PC-9 (cell line): ENCODE measurements at regions of chr16 and their contacts with region 1.

Region 1: DNA sequence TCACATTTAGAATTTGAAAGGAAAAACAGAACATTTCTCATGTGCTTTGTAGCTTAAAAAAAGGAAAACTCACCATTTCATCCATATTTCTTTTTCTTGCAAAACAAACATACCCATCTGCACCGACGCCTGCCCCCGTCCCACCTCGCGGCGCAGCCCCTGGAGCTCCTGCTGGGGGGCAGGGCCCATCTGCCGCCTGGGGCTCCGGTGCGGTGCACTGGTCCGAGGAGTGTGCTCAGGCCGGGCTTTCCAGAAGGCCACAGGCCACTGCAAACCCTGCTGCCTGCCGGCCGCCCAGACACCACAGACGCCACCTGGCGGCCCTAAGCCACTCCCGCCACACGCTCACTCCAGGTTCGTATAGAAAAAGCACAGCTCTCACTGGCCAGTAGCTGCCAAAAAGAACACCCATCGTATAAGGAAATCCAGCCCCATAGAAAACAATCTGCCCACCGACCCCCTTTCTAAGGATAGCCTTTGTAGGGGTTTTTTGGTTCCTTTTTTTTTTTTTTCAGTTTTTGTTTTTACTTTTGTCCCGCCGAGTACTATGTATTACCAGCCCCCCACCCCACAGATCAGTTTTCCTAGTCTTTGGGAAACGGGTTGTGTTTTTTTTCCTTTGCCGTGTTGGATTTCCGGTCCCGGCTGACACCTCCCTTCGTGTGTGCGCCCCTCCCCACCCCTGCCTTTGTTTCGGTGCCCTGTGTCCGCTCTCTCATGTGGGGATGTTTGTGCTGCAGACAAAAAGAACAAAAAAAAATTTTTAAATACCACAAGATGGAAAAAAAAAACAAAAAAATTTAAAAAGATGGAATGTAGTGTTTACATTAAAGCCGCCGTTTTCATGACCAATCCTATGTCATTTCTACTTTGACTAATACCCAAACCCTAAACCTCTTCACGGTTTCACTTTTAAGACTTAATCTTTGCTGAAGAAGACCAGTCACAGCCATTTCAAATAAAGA is 68.8 kb downstream of the AMFR start:
- DNase-seq: peak; percentile 70 to 85
- H3K4me3 ChIP-seq: peak overlapping the region; percentile 54
- H3K27ac ChIP-seq: peak overlapping the region; percentile 66
- H3K4me1 ChIP-seq: peaks cover 37% of the 10 kb centered on the region
- H3K27me3 ChIP-seq: no peaks in the 10 kb centered on the region
- CTCF ChIP-seq: peak; percentile 84

Region 2: GRCh38 chr16:55711959-55712876 is 644.3 kb before region 1 on chr16:
- CTCF ChIA-PET with region 1: no interaction called
- POLR2A ChIA-PET with region 1: no interaction called
- intact Hi-C with region 1: loop called (anchors 2 kb)
- DNase-seq: peak; percentile 46 to 54
- H3K4me3 ChIP-seq: no peak overlapping the region
- H3K27ac ChIP-seq: no peak overlapping the region
- H3K4me1 ChIP-seq: no peaks in the 10 kb centered on the region
- H3K27me3 ChIP-seq: no peaks in the 10 kb centered on the region
- CTCF ChIP-seq: peak; percentile 87

Region 3: GRCh38 chr16:56041686-56042085 is 314.9 kb before region 1 on chr16:
- CTCF ChIA-PET with region 1: no interaction called
- POLR2A ChIA-PET with region 1: no interaction called
- intact Hi-C with region 1: no loop called
- DNase-seq: peak; percentile 16 to 76
- H3K4me3 ChIP-seq: no peak overlapping the region
- H3K27ac ChIP-seq: no peak overlapping the region
- H3K4me1 ChIP-seq: no peaks in the 10 kb centered on the region
- H3K27me3 ChIP-seq: no peaks in the 10 kb centered on the region
- CTCF ChIP-seq: peak; percentile 62

Region 4: GRCh38 chr16:56324406-56324805 is 32.2 kb before region 1 on chr16:
- CTCF ChIA-PET with region 1: interaction called, 4 read pairs
- POLR2A ChIA-PET with region 1: interaction called, 7 read pairs
- intact Hi-C with region 1: loop called (anchors 2 kb)
- DNase-seq: peak; percentile 95 to 97
- H3K4me3 ChIP-seq: no peak overlapping the region
- H3K27ac ChIP-seq: peak overlapping the region; percentile 94
- H3K4me1 ChIP-seq: peaks cover 48% of the 10 kb centered on the region
- H3K27me3 ChIP-seq: no peaks in the 10 kb centered on the region
- CTCF ChIP-seq: no peak

Region 5: DNA sequence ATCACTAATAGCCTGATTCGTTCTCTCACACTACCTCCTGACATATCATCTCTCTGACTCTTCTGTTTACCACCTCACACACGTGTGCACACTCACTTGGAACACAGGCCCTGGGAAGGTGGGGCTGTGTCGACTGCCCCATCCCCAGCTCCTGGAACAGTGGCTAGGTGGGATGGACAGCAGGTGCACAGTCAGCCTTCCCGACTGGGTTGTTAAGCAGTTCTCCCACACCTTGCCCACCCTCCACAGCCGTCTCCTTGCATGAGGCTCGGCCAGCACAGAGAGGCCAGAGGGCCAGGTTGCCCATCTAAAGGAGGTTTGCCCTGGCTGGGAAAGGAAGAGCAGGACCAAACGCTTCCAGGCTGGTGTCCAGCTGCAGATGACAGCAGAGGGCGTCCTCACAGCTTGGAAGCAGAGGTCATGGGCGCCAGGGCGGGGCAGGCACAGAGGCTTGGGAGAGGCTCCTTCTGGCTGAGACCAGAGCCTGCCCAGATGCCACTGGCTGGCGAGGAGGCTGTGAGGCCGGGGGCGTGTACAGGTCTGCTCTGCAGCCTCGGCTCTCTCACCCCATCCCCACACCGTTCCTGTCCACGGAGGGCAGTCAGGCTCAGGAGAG is 24.0 kb before region 1 on chr16:
- CTCF ChIA-PET with region 1: interaction called, 8 read pairs
- POLR2A ChIA-PET with region 1: no interaction called
- intact Hi-C with region 1: loop called (anchors 1 kb)
- DNase-seq: peak; percentile 62 to 83
- H3K4me3 ChIP-seq: no peak overlapping the region
- H3K27ac ChIP-seq: peak overlapping the region; percentile 99
- H3K4me1 ChIP-seq: peaks cover 60% of the 10 kb centered on the region
- H3K27me3 ChIP-seq: no peaks in the 10 kb centered on the region
- CTCF ChIP-seq: no peak

Region 6: GRCh38 chr16:56343661-56344526 is 12.7 kb before region 1 on chr16:
- CTCF ChIA-PET with region 1: interaction called, 13 read pairs
- POLR2A ChIA-PET with region 1: no interaction called
- intact Hi-C with region 1: no loop called
- DNase-seq: peak; percentile 38 to 69
- H3K4me3 ChIP-seq: no peak overlapping the region
- H3K27ac ChIP-seq: no peak overlapping the region
- H3K4me1 ChIP-seq: peaks cover 27% of the 10 kb centered on the region
- H3K27me3 ChIP-seq: no peaks in the 10 kb centered on the region
- CTCF ChIP-seq: no peak

Region 7: GRCh38 chr16:56708525-56709442 is 352.2 kb after region 1 on chr16:
- CTCF ChIA-PET with region 1: no interaction called
- POLR2A ChIA-PET with region 1: no interaction called
- intact Hi-C with region 1: loop called (anchors 10 kb)
- DNase-seq: no peak
- H3K4me3 ChIP-seq: no peak overlapping the region
- H3K27ac ChIP-seq: no peak overlapping the region
- H3K4me1 ChIP-seq: no peaks in the 10 kb centered on the region
- H3K27me3 ChIP-seq: no peaks in the 10 kb centered on the region
- CTCF ChIP-seq: no peak

Region 8: GRCh38 chr16:56944954-56945839 is 588.6 kb after region 1 on chr16:
- CTCF ChIA-PET with region 1: no interaction called
- POLR2A ChIA-PET with region 1: interaction called, 31 read pairs
- intact Hi-C with region 1: no loop called
- DNase-seq: peak; percentile 64 to 74
- H3K4me3 ChIP-seq: no peak overlapping the region
- H3K27ac ChIP-seq: peak overlapping the region; percentile 57
- H3K4me1 ChIP-seq: peaks cover 24% of the 10 kb centered on the region
- H3K27me3 ChIP-seq: no peaks in the 10 kb centered on the region
- CTCF ChIP-seq: no peak